ENCODE measurements at regions of chr20 and their contacts with region 1.

Region 1: GRCh38 chr20:11454966-11455799 is 462.5 kb upstream of the BTBD3 start:
- DNase-seq: peak; percentile 93
- H3K4me3 ChIP-seq: peak overlapping the region in 1 of 3 experiments; percentile 27
- H3K27ac ChIP-seq: peak overlapping the region; percentile 93
- H3K4me1 ChIP-seq: peaks cover 38% of the 10 kb centered on the region
- H3K27me3 ChIP-seq: no peaks in the 10 kb centered on the region
- CTCF ChIP-seq: no peak
- POLR2A ChIP-seq: peak; percentile 10

Region 2: DNA sequence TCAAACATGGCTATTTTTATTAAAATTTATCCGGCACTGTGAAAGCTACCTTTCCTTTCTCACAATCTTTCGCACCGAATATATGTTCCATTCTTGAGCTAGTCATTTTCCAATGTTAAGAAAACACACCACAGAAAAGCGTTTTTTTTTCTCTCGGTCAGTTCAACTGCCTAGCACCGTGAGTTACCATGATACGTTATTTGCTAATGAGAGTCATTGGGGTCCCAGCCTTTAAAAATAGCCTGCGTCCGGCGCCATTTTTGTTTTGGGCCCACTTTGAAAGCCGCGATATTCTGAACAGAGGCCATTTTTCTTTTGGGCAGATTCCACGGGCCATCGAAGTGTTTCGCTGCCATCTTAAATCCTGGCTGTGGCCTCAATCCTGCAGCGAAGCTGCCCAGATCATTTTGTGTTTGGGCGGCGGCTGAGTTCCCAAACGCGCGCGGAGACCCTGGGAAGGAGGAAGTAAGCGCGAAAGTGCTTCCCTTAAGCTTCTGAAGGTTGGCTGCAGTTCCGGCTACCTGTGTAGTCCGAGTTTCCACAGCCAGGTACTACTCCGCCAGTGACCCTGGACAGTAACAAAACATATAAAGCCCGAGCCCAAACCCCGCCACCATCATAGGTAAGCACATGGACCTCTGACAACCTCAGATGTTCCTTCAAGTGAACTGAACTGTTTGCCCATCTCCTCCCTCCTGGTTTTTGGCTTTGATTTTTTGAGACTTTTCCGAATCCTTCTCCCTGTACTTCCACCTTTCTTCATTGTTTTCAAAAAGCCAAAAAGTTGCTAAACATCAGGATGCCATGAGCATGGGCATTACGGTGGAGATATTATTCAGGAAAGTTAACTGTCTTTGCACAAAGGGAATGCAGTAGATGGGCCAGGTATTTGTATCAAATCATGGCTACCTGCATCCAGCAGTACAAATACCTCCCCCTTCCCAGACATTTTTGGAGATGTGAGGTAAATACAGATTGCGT is 1020.1 kb before region 1 on chr20 and contains the start of gene SLX4IP:
- CTCF ChIA-PET with region 1: no interaction called
- POLR2A ChIA-PET with region 1: no interaction called
- dilution Hi-C with region 1: no loop called
- intact Hi-C with region 1: loop called (anchors 10 kb)
- DNase-seq: peak; percentile 95
- H3K4me3 ChIP-seq: peak within 1 kb of the TSS; percentile 96 to 99 (median 97)
- H3K27ac ChIP-seq: peak within 1 kb of the TSS; percentile 97
- H3K4me1 ChIP-seq: peaks cover 15% of the 10 kb centered on the region
- H3K27me3 ChIP-seq: no peaks in the 10 kb centered on the region
- CTCF ChIP-seq: no peak
- POLR2A ChIP-seq: peak; percentile 63
- total RNA-seq, gene SLX4IP: 4.1 and 4.5 TPM in 2 replicates

Region 3: GRCh38 chr20:10961651-10962288 is 493.4 kb before region 1 on chr20:
- CTCF ChIA-PET with region 1: no interaction called
- POLR2A ChIA-PET with region 1: no interaction called
- dilution Hi-C with region 1: no loop called
- intact Hi-C with region 1: loop called (anchors 5 kb)
- DNase-seq: peak; percentile 75
- H3K4me3 ChIP-seq: no peak overlapping the region
- H3K27ac ChIP-seq: no peak overlapping the region
- H3K4me1 ChIP-seq: peaks cover 36% of the 10 kb centered on the region
- H3K27me3 ChIP-seq: no peaks in the 10 kb centered on the region
- CTCF ChIP-seq: no peak
- POLR2A ChIP-seq: no peak

Region 4: GRCh38 chr20:11216451-11217314 is 238.5 kb before region 1 on chr20:
- CTCF ChIA-PET with region 1: no interaction called
- POLR2A ChIA-PET with region 1: no interaction called
- dilution Hi-C with region 1: no loop called
- intact Hi-C with region 1: loop called (anchors 10 kb)
- DNase-seq: peak; percentile 88
- H3K4me3 ChIP-seq: no peak overlapping the region
- H3K27ac ChIP-seq: peak overlapping the region; percentile 74
- H3K4me1 ChIP-seq: peaks cover 33% of the 10 kb centered on the region
- H3K27me3 ChIP-seq: no peaks in the 10 kb centered on the region
- CTCF ChIP-seq: no peak
- POLR2A ChIP-seq: no peak

Region 5: GRCh38 chr20:12053353-12053752 is 598.2 kb after region 1 on chr20:
- CTCF ChIA-PET with region 1: no interaction called
- POLR2A ChIA-PET with region 1: no interaction called
- dilution Hi-C with region 1: no loop called
- intact Hi-C with region 1: loop called (anchors 10 kb)
- DNase-seq: peak; percentile 90
- H3K4me3 ChIP-seq: no peak overlapping the region
- H3K27ac ChIP-seq: peak overlapping the region; percentile 90
- H3K4me1 ChIP-seq: peaks cover 34% of the 10 kb centered on the region
- H3K27me3 ChIP-seq: no peaks in the 10 kb centered on the region
- CTCF ChIP-seq: no peak
- POLR2A ChIP-seq: no peak

Measured in endothelial cell of umbilical vein (primary cell).